Common myeloid progenitor, CD34-positive (primary cell): ENCODE measurements at regions of chr5 and their contacts with region 1.

Region 1: GRCh38 chr5:61055434-61056006 is 106.7 kb downstream of the SMIM15 start:
- DNase-seq: peak; percentile 64 to 84 (median 84)
- H3K4me3 ChIP-seq: no peak overlapping the region
- H3K27ac ChIP-seq: no peak overlapping the region
- H3K4me1 ChIP-seq: no peaks in the 10 kb centered on the region
- H3K27me3 ChIP-seq: no peaks in the 10 kb centered on the region

Region 2: DNA sequence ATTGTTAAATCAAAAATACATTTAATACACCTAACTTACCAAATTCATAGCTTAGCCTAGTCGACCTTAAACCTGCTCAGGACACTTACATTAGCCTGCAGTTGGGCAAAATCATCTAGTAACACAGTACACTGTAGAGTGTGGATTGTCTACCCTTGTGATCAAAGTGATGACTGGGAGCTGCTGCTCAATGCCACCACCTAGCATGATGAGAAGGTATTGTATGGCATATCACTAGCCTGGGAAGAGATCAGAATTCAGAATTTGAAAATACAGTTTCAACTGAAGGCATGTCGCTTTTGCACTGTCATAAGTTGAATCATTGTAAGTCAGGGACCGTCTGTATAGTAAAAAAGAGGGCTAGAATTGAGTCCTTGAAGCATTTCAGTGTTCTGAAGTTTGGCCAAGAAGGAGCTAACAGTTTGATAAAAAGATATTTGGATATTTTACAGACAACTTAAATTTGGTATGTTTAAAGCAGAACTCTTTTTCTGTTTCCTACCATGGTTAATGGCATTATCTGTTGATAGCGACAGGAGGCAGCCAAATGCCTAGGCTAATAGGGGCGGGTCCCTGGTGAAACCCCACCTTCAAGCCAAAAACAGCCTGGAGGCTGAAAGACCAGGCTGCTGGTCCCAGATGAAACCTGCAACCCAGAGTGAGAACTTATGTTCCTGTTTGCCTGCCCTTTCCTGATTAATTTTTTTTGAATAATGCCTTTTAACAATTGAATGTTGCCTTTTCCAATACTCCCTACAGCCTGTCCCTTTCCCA is 83.8 kb after region 1 on chr5:
- CTCF ChIA-PET with region 1: interaction called, 27 read pairs
- POLR2A ChIA-PET with region 1: no interaction called
- DNase-seq: peak in 2 of 3 donors; percentile 29 to 34
- H3K4me3 ChIP-seq: no peak overlapping the region
- H3K27ac ChIP-seq: no peak overlapping the region
- H3K4me1 ChIP-seq: no peaks in the 10 kb centered on the region
- H3K27me3 ChIP-seq: no peaks in the 10 kb centered on the region

Region 3: DNA sequence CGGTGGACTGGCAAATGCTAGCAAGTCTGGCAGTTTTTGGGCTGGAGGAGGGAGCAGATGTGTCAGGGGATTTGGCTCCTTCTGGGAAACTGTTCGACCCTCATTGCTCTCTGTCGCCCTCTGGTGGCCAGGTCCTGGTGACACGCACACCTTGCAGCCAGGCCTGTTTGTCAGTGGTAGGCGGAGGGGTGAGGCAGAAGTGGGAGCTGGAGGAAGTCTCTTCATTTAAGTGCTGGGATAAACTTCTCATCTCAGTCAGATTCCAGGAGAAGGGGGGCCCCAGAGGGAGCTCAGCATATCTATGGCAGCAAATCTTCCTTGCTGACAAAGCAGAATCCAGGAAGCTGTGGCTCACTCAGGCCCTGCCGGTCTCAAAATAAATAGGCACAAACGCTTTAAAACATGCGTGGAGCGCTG is 603.1 kb after region 1 on chr5:
- CTCF ChIA-PET with region 1: interaction called, 27 read pairs
- POLR2A ChIA-PET with region 1: no interaction called
- DNase-seq: peak; percentile 67 to 79 (median 71)
- H3K4me3 ChIP-seq: no peak overlapping the region
- H3K27ac ChIP-seq: no peak overlapping the region
- H3K4me1 ChIP-seq: no peaks in the 10 kb centered on the region
- H3K27me3 ChIP-seq: no peaks in the 10 kb centered on the region

Region 4: DNA sequence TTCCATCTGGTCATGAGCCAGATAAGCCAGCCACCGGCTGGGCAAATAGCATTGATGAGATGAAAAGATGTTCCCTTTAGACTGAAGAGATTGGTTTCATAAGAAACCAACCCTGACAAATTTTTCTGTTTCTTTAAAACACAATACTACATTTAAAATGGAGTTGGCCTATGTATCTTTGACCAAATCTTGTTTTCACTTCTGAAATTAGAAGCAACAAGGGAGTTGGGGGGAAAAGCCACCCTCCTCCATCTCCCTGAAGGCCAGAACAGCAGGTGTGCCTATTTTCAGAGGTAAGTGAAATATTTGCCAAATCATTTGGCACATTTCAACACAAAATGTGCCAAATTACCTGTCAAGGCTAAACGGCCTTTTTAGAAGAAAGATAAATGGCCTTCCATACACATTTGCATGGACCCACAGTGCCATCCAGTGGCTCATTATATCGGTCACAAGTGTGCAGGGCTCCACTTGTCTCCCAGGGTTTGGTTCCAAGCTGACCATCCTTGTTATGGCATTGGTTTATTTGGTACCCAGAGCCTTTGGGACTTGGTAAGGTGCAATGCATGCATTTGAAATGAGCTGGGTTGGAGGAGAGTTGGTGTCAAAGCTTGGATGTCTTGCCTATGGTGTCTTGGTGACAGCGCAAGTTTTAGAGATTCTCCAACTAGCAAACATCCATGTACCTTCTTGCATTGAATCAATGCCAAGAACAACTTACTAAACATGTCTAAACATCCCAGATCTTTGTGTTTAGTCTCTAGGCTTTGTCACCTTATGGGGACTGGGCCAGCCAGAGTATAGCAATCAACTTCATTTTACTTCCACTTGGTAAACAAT is 878.5 kb after region 1 on chr5:
- CTCF ChIA-PET with region 1: interaction called, 10 read pairs
- POLR2A ChIA-PET with region 1: no interaction called
- DNase-seq: peak; percentile 64 to 83 (median 77)
- H3K4me3 ChIP-seq: peak overlapping the region in 3 of 7 experiments; percentile 22 to 59 (median 25)
- H3K27ac ChIP-seq: no peak overlapping the region
- H3K4me1 ChIP-seq: peaks cover 0 to 3% (median 0%) of the 10 kb centered on the region in 4 experiments
- H3K27me3 ChIP-seq: no peaks in the 10 kb centered on the region